ENCODE measurements at regions of chr17 and their contacts with region 1.

Region 1: DNA sequence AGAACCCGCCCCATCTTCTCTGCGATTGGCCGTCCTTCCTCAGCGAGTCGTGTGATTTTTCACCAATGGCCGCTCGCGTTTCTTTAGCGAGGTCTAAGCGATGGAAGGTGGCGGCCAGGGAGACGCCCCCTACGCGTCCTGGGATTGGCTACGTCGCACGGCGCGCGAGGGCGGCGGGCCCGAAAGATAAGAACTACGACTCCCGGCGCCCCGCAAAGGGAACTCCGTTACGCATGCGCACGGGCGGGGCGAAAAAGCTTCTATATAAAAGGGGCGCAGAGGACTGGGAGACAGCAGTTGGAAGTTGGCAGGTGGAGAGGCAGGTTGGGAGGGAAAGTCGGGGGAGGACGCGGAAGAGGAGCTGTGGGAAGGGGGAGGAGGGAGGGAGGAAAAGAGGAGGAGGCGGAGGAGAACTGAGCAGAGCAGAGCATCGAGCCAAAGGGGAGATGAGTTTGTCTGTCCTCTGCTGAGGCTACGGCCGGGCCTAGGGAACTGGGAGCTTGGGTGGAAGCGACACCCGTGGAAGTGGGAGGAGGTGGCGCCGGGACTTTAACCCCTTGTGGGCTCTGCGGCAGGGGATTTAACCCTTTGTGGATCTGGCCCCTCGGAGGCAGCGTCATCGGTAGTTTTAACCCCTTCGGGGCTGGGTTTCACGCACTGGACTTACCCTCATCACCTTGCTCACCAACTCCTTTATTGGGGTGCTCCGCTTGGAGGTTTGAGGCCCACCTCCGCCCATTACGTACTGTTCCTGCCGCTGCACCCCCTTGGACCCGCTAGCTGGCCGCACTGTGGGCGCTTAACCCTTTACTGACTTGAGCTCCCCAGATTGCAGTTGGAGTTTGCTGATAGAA is at the start of gene HEXIM1:
- DNase-seq: peak; percentile 99 to 100
- ATAC-seq: peak; percentile 77 to 84 (median 80)
- H3K4me3 ChIP-seq: peak within 1 kb of the TSS; percentile 76
- H3K27ac ChIP-seq: peak within 1 kb of the TSS; percentile 97
- H3K4me1 ChIP-seq: peaks cover 28% of the 10 kb centered on the region
- H3K27me3 ChIP-seq: no peaks in the 10 kb centered on the region
- CTCF ChIP-seq: no peak
- total RNA-seq, gene HEXIM1: 21.3 to 52.2 (median 31.5) TPM

Region 2: DNA sequence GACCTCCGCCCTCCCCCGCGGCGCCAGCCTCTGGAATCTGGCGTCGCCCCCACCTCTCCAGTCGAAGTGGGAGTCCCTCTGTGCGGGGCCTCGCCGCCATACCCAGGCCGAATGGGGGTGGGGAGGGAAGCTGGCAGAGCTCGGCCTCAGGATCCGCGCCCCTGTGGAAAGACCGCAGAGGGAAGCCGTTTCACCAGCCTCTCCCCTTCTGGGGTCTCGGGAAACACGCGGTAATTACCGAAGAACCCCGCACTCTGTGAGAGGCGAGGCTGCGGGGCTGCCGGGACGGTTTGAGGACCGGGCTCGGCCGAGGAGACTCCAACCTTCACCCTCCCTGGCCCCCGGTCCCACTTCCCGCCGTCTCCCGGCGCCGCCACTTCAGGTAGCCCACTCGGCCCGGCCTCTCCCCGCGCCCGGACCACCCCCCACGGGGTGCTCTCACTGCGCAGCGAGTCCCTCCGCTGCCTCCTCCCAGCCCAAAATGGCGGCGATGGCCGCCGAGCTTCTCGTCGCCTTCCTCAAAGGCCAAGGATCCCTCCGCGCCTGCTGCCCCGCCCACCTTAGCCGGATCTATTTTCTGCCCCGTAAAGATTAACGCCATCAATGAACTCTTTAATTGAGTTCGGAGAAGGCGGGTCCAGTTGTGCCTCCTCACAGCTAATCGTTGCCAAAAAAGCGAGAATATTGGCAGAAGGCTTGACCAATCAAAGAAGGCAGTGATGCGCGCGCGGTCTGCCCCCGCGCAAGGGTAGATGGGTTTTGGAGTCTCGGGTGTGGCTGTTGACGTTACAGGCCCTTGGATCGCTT is 12.8 kb after region 1 on chr17:
- intact Hi-C with region 1: loop called (anchors 1 kb)
- DNase-seq: peak; percentile 97 to 99
- ATAC-seq: peak; percentile 90 to 96 (median 93)
- H3K4me3 ChIP-seq: peak overlapping the region; percentile 82
- H3K27ac ChIP-seq: peak overlapping the region; percentile 100
- H3K4me1 ChIP-seq: peaks cover 43% of the 10 kb centered on the region
- H3K27me3 ChIP-seq: no peaks in the 10 kb centered on the region
- CTCF ChIP-seq: no peak